ENCODE measurements at regions of chr19 and their contacts with region 1.

Region 1: DNA sequence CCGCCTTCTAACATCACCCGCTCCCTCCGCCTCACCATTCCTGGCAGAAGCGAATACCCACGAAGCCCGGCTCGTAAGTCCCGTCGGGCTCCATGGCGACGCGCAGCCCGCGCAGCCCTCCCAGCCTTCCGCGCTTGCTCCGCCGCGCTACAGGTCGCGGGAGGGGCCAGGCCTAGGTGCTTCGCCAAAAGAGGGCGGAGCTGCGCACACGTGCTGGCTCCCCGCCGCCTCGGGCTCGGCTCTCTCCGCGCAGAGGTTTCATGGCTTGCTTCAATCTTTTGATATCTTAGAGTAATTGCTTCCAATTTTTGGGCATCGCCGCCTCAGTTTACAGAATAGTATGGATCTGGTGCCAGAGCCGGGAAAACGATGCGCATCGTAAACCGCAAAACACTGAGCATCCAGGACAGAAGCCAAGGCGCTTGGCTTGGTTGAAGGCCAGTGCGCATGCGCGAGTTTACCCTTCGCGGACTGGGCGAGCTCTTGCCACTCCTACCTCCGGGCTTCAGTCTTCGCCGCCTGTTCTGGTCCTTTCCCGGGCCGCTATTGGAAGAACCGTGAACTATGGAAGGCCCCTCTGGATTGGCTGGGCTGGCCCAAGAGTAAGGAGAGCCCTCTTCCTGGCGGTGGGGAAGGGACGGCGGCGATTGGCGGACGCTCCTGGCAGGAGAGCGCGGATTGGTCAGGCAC is at the start of gene POLR2I:
- DNase-seq: peak; percentile 100
- ATAC-seq: peak; percentile 87
- H3K4me3 ChIP-seq: peak within 1 kb of the TSS; percentile 76 to 91 (median 79)
- H3K4me3 Mint-ChIP-seq: peak within 1 kb of the TSS; percentile 95
- H3K27ac ChIP-seq: peak within 1 kb of the TSS; percentile 84 to 90
- H3K27ac Mint-ChIP-seq: peak within 1 kb of the TSS; percentile 99
- H3K4me1 ChIP-seq: peaks cover 16 to 23% of the 10 kb centered on the region in 2 donors
- H3K4me1 Mint-ChIP-seq: peaks cover 40% of the 10 kb centered on the region
- H3K27me3 ChIP-seq: no peaks in the 10 kb centered on the region
- H3K27me3 Mint-ChIP-seq: no peaks in the 10 kb centered on the region
- CTCF ChIP-seq: no peak
- total RNA-seq, gene POLR2I: 28.2 and 33.4 TPM in 2 replicates

Region 2: DNA sequence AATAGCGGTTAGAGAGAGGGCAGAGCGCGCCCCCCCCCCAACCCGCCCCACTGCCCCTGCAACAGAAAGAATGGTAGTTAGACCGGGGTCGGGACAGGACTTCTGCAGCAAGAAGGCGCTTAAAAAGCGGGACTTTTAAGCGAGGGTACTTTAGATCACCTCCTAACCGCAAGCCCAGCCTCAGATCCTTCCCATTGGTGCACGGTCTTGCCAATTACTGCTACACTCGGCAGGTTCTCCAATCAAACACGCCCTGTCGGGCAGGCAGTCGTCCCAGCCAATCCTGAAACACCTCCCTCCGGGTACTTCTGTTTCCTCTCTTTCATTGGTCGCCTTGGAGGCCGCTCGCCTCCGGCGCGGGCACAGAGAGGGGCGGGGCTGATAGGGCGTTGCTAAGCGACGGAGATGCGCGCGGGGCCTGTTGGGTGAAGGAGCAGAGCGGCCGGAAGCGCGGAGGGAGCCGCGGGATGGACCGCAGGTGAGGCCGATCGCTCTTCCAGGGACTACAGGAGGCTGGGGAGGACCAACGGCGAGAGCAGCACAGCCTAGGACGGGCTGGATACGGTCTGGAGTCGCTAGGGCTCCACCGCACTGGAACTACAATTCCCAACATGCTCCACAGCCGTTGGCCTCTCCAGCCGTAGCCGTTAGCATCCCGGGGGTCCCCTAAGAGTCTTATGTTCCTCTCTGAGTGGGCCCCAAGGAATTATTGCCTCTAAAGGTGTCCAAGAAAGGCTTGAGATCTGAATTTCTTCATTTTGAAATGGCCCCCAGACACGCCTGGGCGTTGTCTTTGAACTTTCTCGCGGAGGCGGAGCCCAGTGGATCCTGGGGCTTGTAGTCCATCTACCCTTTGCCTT is 356.9 kb before region 1 on chr19 and contains the start of gene PROSER3:
- CTCF ChIA-PET with region 1: no interaction called
- POLR2A ChIA-PET with region 1: no interaction called
- intact Hi-C with region 1: loop called (anchors 1 kb)
- DNase-seq: peak; percentile 99
- ATAC-seq: peak; percentile 95
- H3K4me3 ChIP-seq: peak within 1 kb of the TSS; percentile 85 to 99 (median 94)
- H3K4me3 Mint-ChIP-seq: peak within 1 kb of the TSS; percentile 99
- H3K27ac ChIP-seq: peak within 1 kb of the TSS; percentile 91 to 96
- H3K27ac Mint-ChIP-seq: peak within 1 kb of the TSS; percentile 99
- H3K4me1 ChIP-seq: peaks cover 24 to 35% of the 10 kb centered on the region in 2 donors
- H3K4me1 Mint-ChIP-seq: peaks cover 34% of the 10 kb centered on the region
- H3K27me3 ChIP-seq: peaks cover 0 to 26% (median 10%) of the 10 kb centered on the region in 4 experiments
- H3K27me3 Mint-ChIP-seq: peaks cover 17% of the 10 kb centered on the region
- CTCF ChIP-seq: no peak
- total RNA-seq, gene PROSER3: 61.0 and 65.6 TPM in 2 replicates

Region 3: DNA sequence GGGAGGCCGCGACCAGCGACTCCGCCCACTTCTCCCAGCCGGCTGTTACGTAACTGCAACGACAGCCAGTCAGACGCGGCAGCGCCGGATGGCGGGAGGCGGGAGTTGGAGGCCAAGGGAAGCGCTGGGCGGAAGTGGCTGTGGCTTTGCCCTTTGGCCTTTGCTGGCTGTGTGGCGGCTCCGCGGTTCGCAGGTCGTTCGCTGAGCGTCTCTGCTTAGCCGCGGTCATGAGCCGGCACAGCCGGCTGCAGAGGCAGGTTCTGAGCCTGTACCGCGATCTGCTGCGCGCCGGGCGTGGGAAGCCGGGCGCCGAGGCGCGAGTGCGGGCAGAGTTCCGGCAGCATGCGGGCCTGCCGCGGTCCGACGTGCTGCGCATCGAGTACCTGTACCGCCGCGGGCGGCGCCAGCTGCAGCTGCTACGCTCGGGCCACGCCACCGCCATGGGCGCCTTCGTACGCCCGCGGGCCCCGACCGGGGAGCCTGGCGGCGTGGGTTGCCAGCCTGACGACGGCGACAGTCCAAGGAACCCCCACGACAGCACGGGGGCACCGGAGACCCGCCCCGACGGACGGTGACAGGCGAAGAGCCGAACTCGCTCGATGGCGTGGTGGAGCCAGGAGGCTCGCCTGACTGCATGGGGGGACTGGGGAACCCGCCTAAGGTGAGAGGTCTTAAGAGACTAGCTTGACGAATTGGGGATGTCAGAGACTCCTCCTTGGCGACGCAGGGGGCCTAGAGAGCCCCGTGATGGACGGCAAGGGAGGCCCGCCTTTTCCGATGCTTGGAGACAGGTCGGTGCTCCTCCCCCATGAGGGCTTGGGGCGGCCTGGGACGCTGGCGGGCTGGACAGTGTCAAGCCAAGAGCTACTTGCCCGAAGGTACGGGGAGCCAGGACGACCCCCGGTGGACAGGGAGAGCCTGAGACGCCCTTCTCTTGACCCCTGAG is 119.6 kb before region 1 on chr19 and contains the start of gene SDHAF1:
- CTCF ChIA-PET with region 1: no interaction called
- POLR2A ChIA-PET with region 1: interaction called, 4 read pairs
- intact Hi-C with region 1: loop called (anchors 1 kb)
- DNase-seq: peak; percentile 93
- ATAC-seq: peak; percentile 96
- H3K4me3 ChIP-seq: peak within 1 kb of the TSS; percentile 60 to 79 (median 77)
- H3K4me3 Mint-ChIP-seq: peak within 1 kb of the TSS; percentile 97
- H3K27ac ChIP-seq: peak within 1 kb of the TSS; percentile 55 to 81
- H3K27ac Mint-ChIP-seq: peak within 1 kb of the TSS; percentile 96
- H3K4me1 ChIP-seq: peaks cover 18 to 25% of the 10 kb centered on the region in 2 donors
- H3K4me1 Mint-ChIP-seq: peaks cover 32% of the 10 kb centered on the region
- H3K27me3 ChIP-seq: no peaks in the 10 kb centered on the region
- H3K27me3 Mint-ChIP-seq: no peaks in the 10 kb centered on the region
- CTCF ChIP-seq: no peak
- total RNA-seq, gene SDHAF1: 24.2 and 24.6 TPM in 2 replicates

Region 4: DNA sequence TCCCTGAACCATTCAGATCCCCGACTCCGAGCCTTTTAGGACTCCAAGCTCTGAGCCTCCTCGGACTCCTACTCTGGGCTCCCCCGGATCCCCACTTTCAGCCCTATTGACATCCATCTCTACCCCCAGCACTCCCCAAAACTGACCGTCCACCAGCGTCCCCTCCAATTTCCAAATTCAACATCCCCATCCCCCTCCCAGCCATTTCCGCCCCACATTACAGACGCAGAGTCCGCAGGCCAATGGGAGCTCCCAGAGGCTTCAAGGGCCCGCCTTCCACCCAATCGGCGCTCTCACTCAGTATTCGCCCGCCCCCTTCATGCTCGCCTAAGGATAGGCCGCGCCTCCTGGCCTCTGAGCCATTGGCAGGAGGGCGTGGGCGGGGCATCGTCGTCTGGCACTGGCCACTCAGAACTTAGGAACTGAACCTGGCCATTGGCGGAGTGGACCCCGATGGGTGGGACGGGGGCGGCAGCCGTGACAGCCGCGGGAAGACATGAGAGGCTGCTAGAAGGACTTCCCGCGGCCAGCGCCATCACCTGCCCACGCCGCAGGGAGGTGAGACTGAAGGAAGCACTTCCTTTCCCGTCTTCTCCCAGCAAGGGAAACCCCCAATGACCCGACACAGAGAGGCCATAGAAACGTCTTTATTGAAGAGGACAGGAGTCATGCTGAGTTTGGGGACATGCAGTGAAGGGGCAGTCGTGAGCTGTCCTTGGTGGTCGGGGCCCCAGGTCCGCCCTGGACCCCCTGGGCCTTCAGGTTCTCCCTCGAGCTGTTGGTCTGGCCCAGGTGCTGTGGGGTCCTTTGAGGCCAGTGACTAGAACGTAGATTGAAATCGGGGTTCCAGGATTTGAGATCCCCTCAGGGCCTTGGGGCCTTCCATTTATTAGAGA is 100.6 kb before region 1 on chr19 and contains the start of gene ALKBH6:
- CTCF ChIA-PET with region 1: no interaction called
- POLR2A ChIA-PET with region 1: interaction called, 5 read pairs
- intact Hi-C with region 1: loop called (anchors 1 kb)
- DNase-seq: peak; percentile 98
- ATAC-seq: peak; percentile 99
- H3K4me3 ChIP-seq: peak within 1 kb of the TSS; percentile 67 to 94 (median 72)
- H3K4me3 Mint-ChIP-seq: peak within 1 kb of the TSS; percentile 99
- H3K27ac ChIP-seq: peak within 1 kb of the TSS; percentile 70 to 86
- H3K27ac Mint-ChIP-seq: peak within 1 kb of the TSS; percentile 93
- H3K4me1 ChIP-seq: peaks cover 16 to 21% of the 10 kb centered on the region in 2 donors
- H3K4me1 Mint-ChIP-seq: peaks cover 28% of the 10 kb centered on the region
- H3K27me3 ChIP-seq: peaks cover 0 to 6% (median 0%) of the 10 kb centered on the region in 4 experiments
- H3K27me3 Mint-ChIP-seq: no peaks in the 10 kb centered on the region
- CTCF ChIP-seq: no peak
- total RNA-seq, gene ALKBH6: 49.4 and 54.5 TPM in 2 replicates

Region 5: DNA sequence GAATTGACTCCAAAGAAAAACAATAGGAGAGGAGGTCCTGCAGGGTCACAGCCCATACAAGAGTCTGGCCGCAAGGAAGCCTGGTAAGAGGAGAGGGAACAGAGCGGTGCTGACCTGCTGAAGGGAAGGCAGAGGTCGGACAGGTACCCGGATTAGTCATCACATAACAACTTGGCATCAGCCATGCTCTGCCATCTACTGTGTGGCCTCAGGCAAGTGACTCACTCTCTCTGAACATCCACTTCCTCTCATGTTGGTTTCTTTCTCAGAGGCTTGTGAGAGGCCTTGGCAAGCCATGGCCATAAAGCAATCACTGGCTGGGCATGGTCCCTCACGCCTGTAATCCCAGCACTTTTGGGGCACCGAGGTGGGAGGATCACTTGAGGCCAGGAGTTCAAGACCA is 17.6 kb after region 1 on chr19:
- CTCF ChIA-PET with region 1: interaction called, 42 read pairs
- POLR2A ChIA-PET with region 1: interaction called, 5 read pairs
- intact Hi-C with region 1: loop called (anchors 1 kb)
- DNase-seq: no peak
- ATAC-seq: no peak
- H3K4me3 ChIP-seq: no peak overlapping the region
- H3K4me3 Mint-ChIP-seq: no peak overlapping the region
- H3K27ac ChIP-seq: no peak overlapping the region
- H3K27ac Mint-ChIP-seq: no peak overlapping the region
- H3K4me1 ChIP-seq: peaks cover 7 to 28% of the 10 kb centered on the region in 2 donors
- H3K4me1 Mint-ChIP-seq: peaks cover 15% of the 10 kb centered on the region
- H3K27me3 ChIP-seq: no peaks in the 10 kb centered on the region
- H3K27me3 Mint-ChIP-seq: no peaks in the 10 kb centered on the region
- CTCF ChIP-seq: no peak

Region 6: DNA sequence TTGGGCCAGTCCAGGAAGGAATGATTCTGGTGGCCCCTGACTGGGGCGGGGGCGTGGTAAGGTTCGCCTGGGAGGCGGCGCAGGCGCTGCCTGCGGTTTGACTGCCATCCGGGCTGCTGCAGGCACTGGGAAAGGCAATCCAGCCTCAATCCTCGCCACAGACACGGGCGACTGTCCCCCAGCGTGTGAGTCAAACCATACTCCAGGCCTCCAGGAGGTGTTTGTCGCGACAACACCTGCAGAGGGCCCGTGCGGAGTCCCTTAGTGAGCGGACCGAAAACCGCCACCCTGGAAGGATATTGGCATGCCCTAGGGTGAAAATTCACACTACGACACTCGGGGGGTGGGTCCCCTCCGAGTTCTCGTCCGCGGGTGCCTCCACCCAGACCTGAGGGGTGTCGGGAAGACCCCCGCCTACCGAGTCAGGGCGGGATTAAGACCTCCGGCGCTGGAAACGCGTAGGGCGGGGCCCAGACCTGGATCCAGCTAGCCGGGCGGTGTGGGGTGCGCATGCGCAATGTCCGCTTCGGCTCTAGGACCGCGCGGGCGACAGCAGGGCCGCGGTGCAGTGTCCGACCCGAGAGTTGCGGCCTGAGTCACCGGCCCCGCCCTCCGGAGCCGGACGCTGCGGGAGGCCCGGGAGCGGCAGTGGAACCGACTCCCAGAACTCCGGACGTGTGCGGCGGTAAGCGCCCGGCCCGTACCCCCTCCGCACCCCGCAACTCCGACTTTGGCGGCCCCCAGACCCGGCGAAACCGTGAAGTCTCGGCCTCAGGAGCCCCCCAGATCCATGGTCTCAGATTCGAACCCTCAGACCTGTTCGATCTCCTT is 24.8 kb after region 1 on chr19 and contains the start of gene CAPNS1:
- CTCF ChIA-PET with region 1: no interaction called
- POLR2A ChIA-PET with region 1: interaction called, 8 read pairs
- intact Hi-C with region 1: loop called (anchors 1 kb)
- DNase-seq: peak; percentile 95
- ATAC-seq: peak; percentile 76
- H3K4me3 ChIP-seq: peak within 1 kb of the TSS; percentile 76 to 99 (median 89)
- H3K4me3 Mint-ChIP-seq: peak within 1 kb of the TSS; percentile 96
- H3K27ac ChIP-seq: peak within 1 kb of the TSS; percentile 81 to 85
- H3K27ac Mint-ChIP-seq: peak within 1 kb of the TSS; percentile 94
- H3K4me1 ChIP-seq: peaks cover 4 to 14% of the 10 kb centered on the region in 2 donors
- H3K4me1 Mint-ChIP-seq: peaks cover 15% of the 10 kb centered on the region
- H3K27me3 ChIP-seq: no peaks in the 10 kb centered on the region
- H3K27me3 Mint-ChIP-seq: no peaks in the 10 kb centered on the region
- CTCF ChIP-seq: peak; percentile 37
- total RNA-seq, gene CAPNS1: 294 and 296 TPM in 2 replicates

Measured in B cell (primary cell).